Caco-2 (cell line): ENCODE measurements at regions of chr15 and their contacts with region 1.

Region 1: DNA sequence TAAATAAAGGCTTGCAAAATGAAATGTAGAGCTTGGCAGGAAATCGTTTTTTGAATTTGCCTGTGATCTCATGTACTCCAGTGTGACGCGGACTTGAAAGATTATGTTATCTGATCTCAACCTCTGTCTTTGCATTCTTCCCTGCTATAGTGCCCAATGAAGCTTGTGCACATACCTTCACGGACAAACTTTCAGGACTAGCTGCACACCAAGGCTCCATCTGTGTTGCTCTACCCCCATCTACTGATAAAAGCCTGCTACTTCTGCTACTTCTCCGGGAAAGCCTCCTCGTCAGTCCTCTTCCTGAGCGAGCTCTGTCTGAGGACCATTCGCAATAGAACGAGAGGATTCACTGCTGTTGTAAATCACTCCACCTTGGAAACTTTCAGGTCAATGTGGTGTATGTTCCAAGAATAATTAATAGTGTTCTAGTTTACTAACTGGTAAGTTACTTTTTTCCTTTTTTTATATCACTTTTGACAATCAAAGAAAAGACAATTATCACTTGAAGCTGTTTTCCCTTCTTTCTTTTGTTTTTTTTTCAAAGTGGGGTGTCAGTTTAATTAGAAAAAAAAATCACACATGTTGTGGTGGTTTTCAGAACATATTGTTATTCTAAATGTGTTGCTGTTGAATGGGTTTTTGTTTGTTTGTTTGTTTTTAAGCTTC is 217.6 kb downstream of the ARRDC4 start:
- DNase-seq: peak; percentile 69 to 76
- H3K4me3 ChIP-seq: no peak overlapping the region
- H3K4me3 Mint-ChIP-seq: no peak overlapping the region
- H3K27ac Mint-ChIP-seq: no peak overlapping the region
- H3K4me1 ChIP-seq: no peaks in the 10 kb centered on the region
- H3K4me1 Mint-ChIP-seq: no peaks in the 10 kb centered on the region
- H3K27me3 ChIP-seq: no peaks in the 10 kb centered on the region
- H3K27me3 Mint-ChIP-seq: peaks cover 15% of the 10 kb centered on the region
- CTCF ChIP-seq: peak; percentile 53 to 72

Region 2: DNA sequence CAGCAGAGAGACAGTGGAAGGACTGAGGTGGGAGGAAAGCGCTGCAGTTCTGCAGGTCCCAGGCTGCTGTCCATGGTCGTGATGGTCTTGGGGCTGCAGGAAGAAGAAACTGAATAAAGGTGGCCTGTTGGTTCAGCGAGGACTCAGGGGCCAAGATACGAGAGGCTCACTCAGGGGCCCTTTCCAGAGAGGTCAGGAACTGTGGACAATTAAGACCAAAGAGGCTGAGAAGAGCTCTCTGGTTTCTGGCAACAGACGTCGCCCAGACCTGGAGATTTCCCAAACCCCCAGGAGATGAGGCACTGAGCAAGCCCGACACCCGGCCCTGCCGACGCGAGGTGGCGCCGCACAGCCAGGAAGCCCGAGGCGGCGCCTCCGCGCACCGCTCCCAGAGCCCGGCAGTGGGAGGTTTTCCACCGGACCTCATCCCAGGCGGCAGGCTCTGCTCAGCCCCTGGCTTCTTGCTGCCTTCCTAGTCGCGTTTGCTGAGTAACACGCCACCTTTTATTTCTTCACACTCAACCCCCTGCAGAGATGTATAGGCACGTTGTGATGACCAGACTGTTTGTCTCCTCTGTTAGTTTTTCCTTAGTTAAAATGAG is 274.0 kb before region 1 on chr15:
- CTCF ChIA-PET with region 1: interaction called, 8 read pairs
- POLR2A ChIA-PET with region 1: no interaction called
- intact Hi-C with region 1: loop called (anchors 1 kb)
- DNase-seq: peak; percentile 66 to 77
- H3K4me3 ChIP-seq: no peak overlapping the region
- H3K4me3 Mint-ChIP-seq: no peak overlapping the region
- H3K27ac Mint-ChIP-seq: no peak overlapping the region
- H3K4me1 ChIP-seq: no peaks in the 10 kb centered on the region
- H3K4me1 Mint-ChIP-seq: no peaks in the 10 kb centered on the region
- H3K27me3 ChIP-seq: no peaks in the 10 kb centered on the region; the same call in 1 of the 2 replicates
- H3K27me3 Mint-ChIP-seq: peaks cover 9% of the 10 kb centered on the region
- CTCF ChIP-seq: peak; percentile 51 to 77

Region 3: GRCh38 chr15:97909291-97909891 is 268.7 kb before region 1 on chr15:
- CTCF ChIA-PET with region 1: interaction called, 8 read pairs
- POLR2A ChIA-PET with region 1: no interaction called
- intact Hi-C with region 1: loop called (anchors 1 kb)
- DNase-seq: peak; percentile 58 to 75
- H3K4me3 ChIP-seq: no peak overlapping the region
- H3K4me3 Mint-ChIP-seq: no peak overlapping the region
- H3K27ac Mint-ChIP-seq: no peak overlapping the region
- H3K4me1 ChIP-seq: no peaks in the 10 kb centered on the region
- H3K4me1 Mint-ChIP-seq: no peaks in the 10 kb centered on the region
- H3K27me3 ChIP-seq: no peaks in the 10 kb centered on the region
- H3K27me3 Mint-ChIP-seq: peaks cover 6% of the 10 kb centered on the region
- CTCF ChIP-seq: peak; percentile 62 to 88

Region 4: DNA sequence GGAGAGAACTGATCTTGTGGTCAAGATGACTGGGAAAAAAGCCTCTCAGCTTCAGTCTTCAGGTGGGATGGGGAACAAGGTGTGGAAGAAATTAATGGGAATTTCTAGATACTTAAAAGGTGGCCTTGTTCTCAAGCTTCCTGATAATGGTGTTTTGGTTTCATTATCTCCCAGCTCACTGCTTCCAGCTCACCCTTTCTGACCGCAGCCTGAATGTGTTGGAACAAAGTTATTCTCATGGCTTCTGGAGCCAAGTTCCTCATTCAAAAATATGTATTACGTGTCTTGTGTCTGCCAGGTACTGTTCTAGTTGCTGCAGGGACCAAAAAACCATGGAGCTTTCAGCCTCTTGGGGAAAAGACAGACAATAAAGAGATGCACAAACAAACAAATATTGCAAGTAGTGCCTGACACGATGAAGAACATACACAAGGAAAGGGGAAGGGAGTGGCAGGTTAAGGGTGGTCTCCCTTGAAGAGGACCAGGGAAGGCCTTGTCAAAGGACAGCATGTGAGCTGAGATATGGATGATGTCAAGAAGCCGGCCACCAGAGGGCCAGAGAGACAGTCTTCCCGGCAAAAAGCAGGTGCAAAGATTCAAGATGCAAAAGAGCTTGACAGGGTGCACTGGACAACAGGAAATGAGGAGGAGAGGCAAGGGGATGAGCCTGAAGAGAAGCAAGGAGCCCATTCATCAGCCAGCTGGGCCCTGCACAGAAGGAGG is 182.0 kb before region 1 on chr15:
- CTCF ChIA-PET with region 1: interaction called, 8 read pairs
- POLR2A ChIA-PET with region 1: no interaction called
- intact Hi-C with region 1: loop called (anchors 1 kb)
- DNase-seq: peak; percentile 12 to 43
- H3K4me3 ChIP-seq: no peak overlapping the region
- H3K4me3 Mint-ChIP-seq: no peak overlapping the region
- H3K27ac Mint-ChIP-seq: no peak overlapping the region
- H3K4me1 ChIP-seq: 0 out of 2 replicates have a peak, but pooled peaks cover 7% of the 10 kb centered on the region
- H3K4me1 Mint-ChIP-seq: no peaks in the 10 kb centered on the region
- H3K27me3 ChIP-seq: no peaks in the 10 kb centered on the region
- H3K27me3 Mint-ChIP-seq: no peaks in the 10 kb centered on the region
- CTCF ChIP-seq: peak; percentile 38 to 46

Region 5: DNA sequence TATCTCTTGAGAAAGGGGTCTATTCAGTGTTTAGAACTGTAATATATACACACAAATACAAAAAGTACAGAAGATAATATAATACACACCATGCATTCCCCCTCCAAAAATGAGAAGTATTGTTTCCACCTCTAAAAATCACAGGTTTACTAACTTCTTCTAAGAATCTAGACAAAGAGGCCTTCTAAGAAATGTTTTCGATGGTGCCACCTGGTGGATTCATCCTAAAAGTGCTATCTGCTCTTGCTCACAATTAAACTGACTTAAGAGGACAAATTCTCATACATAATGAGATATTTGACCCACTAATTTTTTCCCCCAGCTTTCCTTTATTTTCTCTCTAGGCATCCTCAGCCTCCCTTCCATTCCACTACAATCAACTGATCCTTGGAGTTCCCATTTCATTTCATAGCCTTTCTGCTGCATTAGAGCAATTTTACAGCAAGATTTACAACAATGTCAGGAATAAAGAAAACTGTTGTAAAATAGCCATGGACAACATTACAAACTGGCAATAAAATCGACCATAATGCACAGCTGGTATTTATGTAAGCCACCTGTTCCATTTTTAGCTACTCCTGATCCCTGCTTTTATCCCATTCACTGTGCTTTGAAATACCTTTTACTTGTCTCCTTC is 92.9 kb before region 1 on chr15:
- CTCF ChIA-PET with region 1: interaction called, 6 read pairs
- POLR2A ChIA-PET with region 1: no interaction called
- intact Hi-C with region 1: loop called (anchors 1 kb)
- DNase-seq: peak in 1 of 2 experiments; percentile 29
- H3K4me3 ChIP-seq: no peak overlapping the region
- H3K4me3 Mint-ChIP-seq: no peak overlapping the region
- H3K27ac Mint-ChIP-seq: no peak overlapping the region
- H3K4me1 ChIP-seq: no peaks in the 10 kb centered on the region
- H3K4me1 Mint-ChIP-seq: no peaks in the 10 kb centered on the region
- H3K27me3 ChIP-seq: no peaks in the 10 kb centered on the region
- H3K27me3 Mint-ChIP-seq: no peaks in the 10 kb centered on the region
- CTCF ChIP-seq: peak; percentile 43 to 55

Region 6: DNA sequence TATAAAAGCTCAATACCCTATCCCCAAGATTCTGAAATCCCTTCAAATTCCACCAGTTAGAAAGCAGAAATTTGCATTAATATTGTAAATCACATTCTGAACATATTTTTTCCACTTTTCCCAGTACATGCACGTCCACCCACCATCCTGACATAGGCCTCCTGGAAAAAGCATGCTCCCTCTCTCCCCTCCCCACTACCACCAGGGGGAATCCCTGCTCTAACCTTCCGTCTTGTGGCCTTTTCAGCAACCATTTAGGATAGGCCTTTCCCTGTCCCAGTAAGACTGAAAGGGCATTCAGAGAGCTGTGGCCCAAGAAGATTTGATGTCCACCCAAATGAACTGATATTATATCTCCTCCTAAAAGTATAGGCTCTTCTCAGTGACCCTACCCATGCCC is 35.5 kb before region 1 on chr15:
- CTCF ChIA-PET with region 1: interaction called, 6 read pairs
- POLR2A ChIA-PET with region 1: no interaction called
- intact Hi-C with region 1: loop called (anchors 1 kb)
- DNase-seq: no peak
- H3K4me3 ChIP-seq: no peak overlapping the region
- H3K4me3 Mint-ChIP-seq: no peak overlapping the region
- H3K27ac Mint-ChIP-seq: no peak overlapping the region
- H3K4me1 ChIP-seq: no peaks in the 10 kb centered on the region
- H3K4me1 Mint-ChIP-seq: no peaks in the 10 kb centered on the region
- H3K27me3 ChIP-seq: no peaks in the 10 kb centered on the region
- H3K27me3 Mint-ChIP-seq: no peaks in the 10 kb centered on the region
- CTCF ChIP-seq: peak in 1 of 2 experiments; percentile 10

Region 7: GRCh38 chr15:98292442-98293240 is 114.6 kb after region 1 on chr15:
- CTCF ChIA-PET with region 1: no interaction called
- POLR2A ChIA-PET with region 1: no interaction called
- intact Hi-C with region 1: loop called (anchors 5 kb)
- DNase-seq: peak; percentile 61
- H3K4me3 ChIP-seq: no peak overlapping the region
- H3K4me3 Mint-ChIP-seq: no peak overlapping the region
- H3K27ac Mint-ChIP-seq: no peak overlapping the region
- H3K4me1 ChIP-seq: no peaks in the 10 kb centered on the region
- H3K4me1 Mint-ChIP-seq: no peaks in the 10 kb centered on the region
- H3K27me3 ChIP-seq: no peaks in the 10 kb centered on the region
- H3K27me3 Mint-ChIP-seq: peaks cover 7% of the 10 kb centered on the region
- CTCF ChIP-seq: peak; percentile 44 to 69